ENCODE measurements at regions of chr17 and their contacts with region 1.

Region 1: GRCh38 chr17:28842282-28843012 is at the start of gene FAM222B:
- DNase-seq: peak; percentile 84
- H3K4me3 Mint-ChIP-seq: peak within 1 kb of the TSS; percentile 98
- H3K27ac Mint-ChIP-seq: peak within 1 kb of the TSS; percentile 96
- H3K4me1 Mint-ChIP-seq: peaks cover 19% of the 10 kb centered on the region
- H3K27me3 Mint-ChIP-seq: no peaks in the 10 kb centered on the region
- total RNA-seq, gene FAM222B: 19.6 and 23.0 TPM in 2 replicates

Region 2: GRCh38 chr17:28763804-28764266 is 78.6 kb before region 1 on chr17:
- intact Hi-C with region 1: loop called (anchors 5 kb)
- DNase-seq: peak; percentile 60
- H3K4me3 Mint-ChIP-seq: no peak overlapping the region
- H3K27ac Mint-ChIP-seq: no peak overlapping the region
- H3K4me1 Mint-ChIP-seq: peaks cover 13% of the 10 kb centered on the region
- H3K27me3 Mint-ChIP-seq: no peaks in the 10 kb centered on the region

Region 3: GRCh38 chr17:28951991-28952975 is 109.8 kb after region 1 on chr17:
- intact Hi-C with region 1: loop called (anchors 5 kb)
- DNase-seq: peak; percentile 95
- H3K4me3 Mint-ChIP-seq: no peak overlapping the region
- H3K27ac Mint-ChIP-seq: no peak overlapping the region
- H3K4me1 Mint-ChIP-seq: peaks cover 9% of the 10 kb centered on the region
- H3K27me3 Mint-ChIP-seq: no peaks in the 10 kb centered on the region

Region 4: GRCh38 chr17:28982131-28982951 is 139.9 kb after region 1 on chr17:
- intact Hi-C with region 1: no loop called
- DNase-seq: peak; percentile 40
- H3K4me3 Mint-ChIP-seq: no peak overlapping the region
- H3K27ac Mint-ChIP-seq: peak overlapping the region; percentile 70
- H3K4me1 Mint-ChIP-seq: peaks cover 19% of the 10 kb centered on the region
- H3K27me3 Mint-ChIP-seq: no peaks in the 10 kb centered on the region

Measured in activated T-helper 2 cell treated with anti-CD3 and anti-CD28 coated beads, Interferon-gamma antibody, Interleukin-2, Interleukin-4, amounts not matched to agents 10 μg/mL and 5 μg/mL and 100 μg/mL, durations not matched to agents 14 hours and 24 hours and 36 hours (primary cell).